WTC11 (cell line): ENCODE measurements at regions of chr19 and their contacts with region 1.

Region 1: GRCh38 chr19:45113616-45114015 is 20.6 kb downstream of the PPP1R37 start:
- DNase-seq: no peak
- ATAC-seq: no peak
- H3K4me3 Mint-ChIP-seq: no peak overlapping the region
- H3K27ac Mint-ChIP-seq: peak overlapping the region; percentile 36; the same call in 1 of the 2 replicates
- H3K4me1 Mint-ChIP-seq: peaks cover 10% of the 10 kb centered on the region; the same call in 1 of the 2 replicates
- H3K27me3 Mint-ChIP-seq: no peaks in the 10 kb centered on the region
- CTCF ChIP-seq: no peak

Region 2: GRCh38 chr19:45027371-45027770 is 86.2 kb before region 1 on chr19:
- CTCF ChIA-PET with region 1: no interaction called
- POLR2A ChIA-PET with region 1: no interaction called
- DNase-seq: no peak
- ATAC-seq: peak; percentile 56
- H3K4me3 Mint-ChIP-seq: no peak overlapping the region
- H3K27ac Mint-ChIP-seq: no peak overlapping the region
- H3K4me1 Mint-ChIP-seq: no peaks in the 10 kb centered on the region
- H3K27me3 Mint-ChIP-seq: no peaks in the 10 kb centered on the region; the same call in 1 of the 2 replicates
- CTCF ChIP-seq: no peak

Region 3: GRCh38 chr19:45103156-45103507 is 10.5 kb before region 1 on chr19:
- CTCF ChIA-PET with region 1: interaction called, 11 read pairs
- POLR2A ChIA-PET with region 1: no interaction called
- DNase-seq: no peak
- ATAC-seq: no peak
- H3K4me3 Mint-ChIP-seq: no peak overlapping the region
- H3K27ac Mint-ChIP-seq: no peak overlapping the region
- H3K4me1 Mint-ChIP-seq: peaks cover 42% of the 10 kb centered on the region
- H3K27me3 Mint-ChIP-seq: no peaks in the 10 kb centered on the region
- CTCF ChIP-seq: no peak